ENCODE measurements at regions of chr11 and their contacts with region 1.

Region 1: GRCh38 chr11:47987781-47988180 is 7.4 kb downstream of the PTPRJ start:
- DNase-seq: no peak
- H3K4me3 ChIP-seq: no peak overlapping the region
- H3K27ac ChIP-seq: no peak overlapping the region
- H3K4me1 ChIP-seq: peaks cover 0 to 9% (median 3%) of the 10 kb centered on the region in 4 donors
- H3K27me3 ChIP-seq: no peaks in the 10 kb centered on the region
- CTCF ChIP-seq: no peak

Region 2: DNA sequence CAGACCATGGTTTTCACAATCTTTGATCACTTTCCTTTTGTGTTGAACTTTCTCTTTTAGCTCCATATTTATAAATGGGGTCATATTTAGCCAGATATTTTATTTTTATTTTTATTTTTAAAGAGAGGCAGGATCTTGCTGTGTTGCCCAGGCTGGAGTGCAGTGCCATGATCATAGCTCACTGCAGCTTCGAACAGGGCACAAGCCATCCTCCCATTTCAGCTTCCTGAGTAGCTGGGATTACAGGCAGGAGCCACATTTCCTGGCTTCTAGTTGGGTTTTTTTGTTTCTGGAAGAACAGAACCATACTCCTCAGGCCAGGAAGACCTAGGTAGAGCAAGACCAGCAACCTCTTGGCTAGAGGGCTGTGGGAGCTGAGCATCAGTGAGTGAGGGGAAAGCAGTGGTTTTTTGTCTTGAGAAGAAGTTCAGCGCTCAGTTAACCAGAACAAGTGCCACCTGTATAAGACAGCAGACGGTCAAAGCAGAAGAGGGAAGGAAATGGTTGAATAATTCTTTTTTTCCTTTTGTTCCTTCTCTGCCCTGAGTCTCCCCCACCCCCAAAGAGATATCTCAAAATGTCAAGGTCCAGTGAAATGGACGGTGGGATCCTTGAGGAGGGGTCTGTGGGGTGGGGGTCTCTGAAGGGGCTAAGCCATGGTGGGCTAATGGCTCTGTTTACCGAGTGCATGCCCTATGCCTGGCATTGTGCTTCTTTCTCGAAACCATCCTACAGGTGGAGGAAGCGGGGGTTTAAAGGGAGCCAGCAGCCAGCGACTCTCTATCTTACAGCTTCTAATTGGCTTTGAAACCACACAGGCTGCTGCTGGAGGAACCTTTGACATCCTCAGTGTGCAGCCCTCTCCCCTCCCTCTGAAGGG is 55.6 kb after region 1 on chr11:
- intact Hi-C with region 1: no loop called
- DNase-seq: no peak
- H3K4me3 ChIP-seq: no peak overlapping the region
- H3K27ac ChIP-seq: no peak overlapping the region
- H3K4me1 ChIP-seq: peaks cover 0 to 7% (median 0%) of the 10 kb centered on the region in 4 donors
- H3K27me3 ChIP-seq: no peaks in the 10 kb centered on the region
- CTCF ChIP-seq: no peak

Region 3: GRCh38 chr11:48063424-48063978 is 75.7 kb after region 1 on chr11:
- intact Hi-C with region 1: loop called (anchors 5 kb)
- DNase-seq: no peak
- H3K4me3 ChIP-seq: no peak overlapping the region
- H3K27ac ChIP-seq: peak overlapping the region; percentile 33 to 52
- H3K4me1 ChIP-seq: peaks cover 0 to 22% (median 11%) of the 10 kb centered on the region in 4 donors
- H3K27me3 ChIP-seq: no peaks in the 10 kb centered on the region
- CTCF ChIP-seq: no peak